ENCODE measurements at regions of chr14 and their contacts with region 1.

Region 1: GRCh38 chr14:34982417-34983147 is at the start of gene SRP54:
- DNase-seq: peak; percentile 100
- ATAC-seq: peak; percentile 91
- H3K4me3 Mint-ChIP-seq: no peak within 1 kb of the TSS
- H3K27ac Mint-ChIP-seq: no peak within 1 kb of the TSS
- H3K4me1 Mint-ChIP-seq: peaks cover 16% of the 10 kb centered on the region
- H3K27me3 Mint-ChIP-seq: no peaks in the 10 kb centered on the region
- total RNA-seq, gene SRP54: 81.1 to 88.4 TPM

Region 2: GRCh38 chr14:34629657-34630529 is 352.7 kb before region 1 on chr14 and contains the start of gene SNX6:
- CTCF ChIA-PET with region 1: no interaction called
- POLR2A ChIA-PET with region 1: no interaction called
- intact Hi-C with region 1: loop called in 1 of 2 experiments (anchors 1 kb)
- DNase-seq: peak; percentile 93
- ATAC-seq: peak; percentile 98
- H3K4me3 Mint-ChIP-seq: peak within 1 kb of the TSS; percentile 97
- H3K27ac Mint-ChIP-seq: peak within 1 kb of the TSS; percentile 98
- H3K4me1 Mint-ChIP-seq: peaks cover 25% of the 10 kb centered on the region
- H3K27me3 Mint-ChIP-seq: no peaks in the 10 kb centered on the region
- total RNA-seq, gene SNX6: 77.3 to 78.7 TPM

Region 3: DNA sequence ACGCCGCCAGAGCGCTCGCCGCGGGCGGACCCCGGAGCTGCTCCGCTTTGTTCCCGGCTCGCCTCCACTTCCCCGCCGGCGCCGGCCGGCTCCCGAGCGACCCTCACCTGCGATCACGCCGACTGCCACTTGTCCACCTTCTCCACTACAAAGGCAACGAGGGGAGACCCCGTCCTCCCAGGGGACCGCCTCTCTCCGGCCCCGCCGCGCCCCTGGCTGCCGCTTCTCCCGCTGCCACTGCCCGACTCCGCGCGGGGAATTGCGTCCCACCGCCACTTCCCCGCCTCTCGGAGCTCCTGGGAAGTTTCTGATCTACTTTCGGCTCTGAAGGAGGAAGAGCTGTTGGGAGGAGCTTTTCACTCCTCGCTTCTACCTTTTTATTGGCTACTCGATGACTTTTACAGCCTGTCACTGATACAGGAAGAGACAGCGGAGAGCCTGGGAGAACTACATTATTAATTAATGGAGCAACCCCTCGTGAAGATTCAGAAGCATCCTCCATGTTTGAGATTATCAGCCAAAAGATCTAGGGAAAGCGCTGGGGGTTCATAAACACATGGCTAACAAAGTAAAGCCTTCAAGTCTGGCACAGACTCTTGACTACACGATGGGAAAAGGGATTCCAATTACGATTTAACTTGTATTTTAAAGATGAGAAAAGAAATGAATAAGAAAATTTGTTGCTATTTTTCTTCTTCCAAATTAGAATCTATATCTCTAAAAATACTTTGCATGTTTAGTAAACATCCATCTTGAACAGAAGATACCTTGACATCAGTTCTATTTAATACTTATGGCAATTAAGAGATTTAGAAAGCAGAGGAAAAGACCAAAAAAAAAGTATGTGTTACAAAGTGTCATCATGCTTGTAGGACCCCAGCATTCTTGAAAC is 107.3 kb before region 1 on chr14 and contains the start of gene BAZ1A:
- CTCF ChIA-PET with region 1: interaction called, 5 read pairs
- POLR2A ChIA-PET with region 1: interaction called, 20 read pairs
- intact Hi-C with region 1: loop called (anchors 1 kb)
- DNase-seq: peak; percentile 50
- ATAC-seq: peak; percentile 9
- H3K4me3 Mint-ChIP-seq: peak within 1 kb of the TSS; percentile 99
- H3K27ac Mint-ChIP-seq: peak within 1 kb of the TSS; percentile 98
- H3K4me1 Mint-ChIP-seq: peaks cover 29% of the 10 kb centered on the region
- H3K27me3 Mint-ChIP-seq: no peaks in the 10 kb centered on the region
- total RNA-seq, gene BAZ1A: 53.9 to 75.2 TPM

Region 4: DNA sequence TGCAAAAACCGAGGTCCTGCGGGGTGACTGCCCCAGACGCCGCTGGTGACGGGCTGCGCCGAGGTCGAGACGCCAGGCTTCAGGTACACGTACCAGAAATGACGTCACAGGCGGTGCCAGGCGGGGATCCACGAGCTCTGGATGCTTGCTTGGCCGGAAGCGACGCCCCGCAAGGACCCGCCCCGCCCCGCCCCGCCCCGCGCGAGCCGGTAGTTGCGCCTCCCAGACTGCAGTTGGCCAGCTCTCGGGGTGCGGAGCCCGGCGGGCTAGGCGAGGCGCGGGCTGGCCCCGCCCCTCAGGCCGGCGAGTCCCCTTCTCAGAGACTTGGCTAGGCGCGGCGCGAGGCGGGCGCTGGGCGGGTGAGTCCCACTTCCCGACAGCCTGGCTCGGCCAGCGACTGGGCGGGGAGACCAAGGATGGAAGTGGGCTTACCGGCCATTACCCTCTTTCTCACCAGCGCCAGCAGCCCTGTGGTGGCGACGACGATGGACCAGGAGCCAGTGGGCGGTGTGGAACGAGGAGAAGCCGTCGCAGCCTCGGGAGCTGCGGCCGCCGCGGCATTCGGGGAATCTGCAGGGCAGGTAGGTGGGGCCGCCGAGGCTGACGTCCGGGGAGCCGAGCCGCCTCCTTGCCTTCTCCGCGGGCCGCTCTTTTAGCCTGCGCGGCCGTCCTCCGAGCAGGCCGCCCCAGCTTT is 63.6 kb after region 1 on chr14 and contains the start of gene FAM177A1:
- CTCF ChIA-PET with region 1: interaction called, 6 read pairs
- POLR2A ChIA-PET with region 1: interaction called, 21 read pairs
- intact Hi-C with region 1: loop called (anchors 1 kb)
- DNase-seq: peak; percentile 100
- ATAC-seq: peak; percentile 94
- H3K4me3 Mint-ChIP-seq: peak within 1 kb of the TSS; percentile 95
- H3K27ac Mint-ChIP-seq: peak within 1 kb of the TSS; percentile 99
- H3K4me1 Mint-ChIP-seq: peaks cover 23% of the 10 kb centered on the region
- H3K27me3 Mint-ChIP-seq: no peaks in the 10 kb centered on the region
- total RNA-seq, gene FAM177A1: 35.4 to 37.2 TPM

Region 5: GRCh38 chr14:35114034-35114433 is 131.5 kb after region 1 on chr14:
- CTCF ChIA-PET with region 1: no interaction called
- POLR2A ChIA-PET with region 1: no interaction called
- intact Hi-C with region 1: no loop called
- DNase-seq: no peak
- ATAC-seq: no peak
- H3K4me3 Mint-ChIP-seq: no peak overlapping the region
- H3K27ac Mint-ChIP-seq: no peak overlapping the region
- H3K4me1 Mint-ChIP-seq: peaks cover 17% of the 10 kb centered on the region
- H3K27me3 Mint-ChIP-seq: no peaks in the 10 kb centered on the region

Region 6: DNA sequence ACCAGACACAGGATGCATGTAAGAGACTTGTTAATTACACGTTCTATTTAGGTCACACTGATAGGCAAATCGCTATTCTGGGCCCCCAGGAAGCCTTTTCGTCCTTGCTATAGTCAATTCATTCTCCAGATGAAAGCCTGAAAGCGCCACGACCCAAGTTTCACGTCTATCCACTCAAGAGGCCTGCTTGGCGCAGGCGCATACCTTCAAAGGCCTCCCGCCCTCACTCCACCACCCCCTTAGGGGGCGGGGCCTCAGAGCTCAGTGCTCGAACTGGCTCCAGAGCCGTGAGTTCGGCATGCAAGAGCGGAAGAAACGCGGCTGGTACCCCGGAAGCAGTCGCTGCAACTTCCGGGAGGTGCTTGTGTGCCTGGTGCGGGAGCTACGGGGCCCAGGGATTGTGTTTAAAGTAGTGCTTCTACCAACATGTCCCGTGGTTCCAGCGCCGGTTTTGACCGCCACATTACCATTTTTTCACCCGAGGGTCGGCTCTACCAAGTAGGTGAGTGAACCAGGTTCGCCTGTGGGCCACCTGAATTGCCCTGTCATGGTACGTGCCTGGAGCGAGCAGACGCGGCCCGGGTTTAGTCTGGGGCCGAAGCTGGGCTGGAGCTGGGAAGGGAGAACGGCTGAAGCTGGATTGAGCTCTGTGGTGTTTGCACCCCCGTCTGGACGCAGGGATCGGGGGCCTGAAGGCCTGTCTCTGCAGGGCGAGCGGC is 309.6 kb after region 1 on chr14 and contains the start of gene PSMA6:
- CTCF ChIA-PET with region 1: no interaction called
- POLR2A ChIA-PET with region 1: interaction called, 8 read pairs
- intact Hi-C with region 1: loop called (anchors 1 to 2 kb)
- DNase-seq: peak; percentile 100
- ATAC-seq: peak; percentile 86
- H3K4me3 Mint-ChIP-seq: peak within 1 kb of the TSS; percentile 85
- H3K27ac Mint-ChIP-seq: peak within 1 kb of the TSS; percentile 96
- H3K4me1 Mint-ChIP-seq: peaks cover 52% of the 10 kb centered on the region
- H3K27me3 Mint-ChIP-seq: no peaks in the 10 kb centered on the region
- total RNA-seq, gene PSMA6: 374 to 425 TPM

Region 7: GRCh38 chr14:35826218-35826951 is 843.8 kb after region 1 on chr14 and contains the start of gene BRMS1L:
- CTCF ChIA-PET with region 1: no interaction called
- POLR2A ChIA-PET with region 1: interaction called, 3 read pairs
- intact Hi-C with region 1: loop called in 1 of 2 experiments (anchors 1 kb)
- DNase-seq: peak; percentile 99
- ATAC-seq: peak; percentile 98
- H3K4me3 Mint-ChIP-seq: peak within 1 kb of the TSS; percentile 71
- H3K27ac Mint-ChIP-seq: peak within 1 kb of the TSS; percentile 90
- H3K4me1 Mint-ChIP-seq: peaks cover 24% of the 10 kb centered on the region
- H3K27me3 Mint-ChIP-seq: no peaks in the 10 kb centered on the region
- total RNA-seq, gene BRMS1L: 5.3 to 7.8 TPM

Measured in activated CD4-positive, alpha-beta T cell treated with anti-CD3 and anti-CD28 coated beads for 36 hours (primary cell).